IMR-90 (cell line): ENCODE measurements at regions of chr19 and their contacts with region 1.

Region 1: DNA sequence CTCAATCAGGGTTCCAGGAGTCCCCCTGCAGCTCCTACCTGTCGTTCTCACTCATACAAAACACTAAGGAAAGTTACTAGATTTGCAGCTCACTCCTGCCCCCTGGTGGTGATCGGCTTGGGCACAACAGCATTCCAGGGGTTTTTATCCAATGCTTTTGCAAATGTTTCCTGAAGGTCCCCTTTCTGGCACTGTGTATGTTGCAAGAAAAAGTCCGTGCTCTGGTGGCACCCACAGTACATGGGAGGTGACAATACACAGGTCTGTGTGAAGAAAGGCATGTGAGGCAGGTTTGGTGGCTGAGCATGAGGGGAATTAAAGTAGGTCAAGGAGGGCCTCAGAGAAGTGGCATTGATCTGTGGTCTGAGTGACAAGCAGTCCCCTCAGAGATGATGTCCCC is 8.6 kb upstream of the TYK2 start:
- DNase-seq: peak; percentile 71
- ATAC-seq: peak; percentile 76
- H3K4me3 ChIP-seq: no peak overlapping the region
- H3K27ac ChIP-seq: no peak overlapping the region
- H3K4me1 ChIP-seq: no peaks in the 10 kb centered on the region
- H3K27me3 ChIP-seq: no peaks in the 10 kb centered on the region
- CTCF ChIP-seq: peak; percentile 86
- POLR2A ChIP-seq: no peak
- RAD21 ChIP-seq: peak; percentile 74

Region 2: GRCh38 chr19:10259162-10259905 is 129.6 kb before region 1 on chr19:
- CTCF ChIA-PET with region 1: interaction called, 7 read pairs
- POLR2A ChIA-PET with region 1: no interaction called
- dilution Hi-C with region 1: no loop called
- in situ Hi-C with region 1: loop called (anchors 5 kb)
- intact Hi-C with region 1: loop called (anchors 1 kb)
- DNase-seq: peak; percentile 85
- ATAC-seq: peak; percentile 85
- H3K4me3 ChIP-seq: no peak overlapping the region
- H3K27ac ChIP-seq: no peak overlapping the region
- H3K4me1 ChIP-seq: no peaks in the 10 kb centered on the region
- H3K27me3 ChIP-seq: no peaks in the 10 kb centered on the region
- CTCF ChIP-seq: peak; percentile 79
- POLR2A ChIP-seq: no peak
- RAD21 ChIP-seq: peak; percentile 81

Region 3: DNA sequence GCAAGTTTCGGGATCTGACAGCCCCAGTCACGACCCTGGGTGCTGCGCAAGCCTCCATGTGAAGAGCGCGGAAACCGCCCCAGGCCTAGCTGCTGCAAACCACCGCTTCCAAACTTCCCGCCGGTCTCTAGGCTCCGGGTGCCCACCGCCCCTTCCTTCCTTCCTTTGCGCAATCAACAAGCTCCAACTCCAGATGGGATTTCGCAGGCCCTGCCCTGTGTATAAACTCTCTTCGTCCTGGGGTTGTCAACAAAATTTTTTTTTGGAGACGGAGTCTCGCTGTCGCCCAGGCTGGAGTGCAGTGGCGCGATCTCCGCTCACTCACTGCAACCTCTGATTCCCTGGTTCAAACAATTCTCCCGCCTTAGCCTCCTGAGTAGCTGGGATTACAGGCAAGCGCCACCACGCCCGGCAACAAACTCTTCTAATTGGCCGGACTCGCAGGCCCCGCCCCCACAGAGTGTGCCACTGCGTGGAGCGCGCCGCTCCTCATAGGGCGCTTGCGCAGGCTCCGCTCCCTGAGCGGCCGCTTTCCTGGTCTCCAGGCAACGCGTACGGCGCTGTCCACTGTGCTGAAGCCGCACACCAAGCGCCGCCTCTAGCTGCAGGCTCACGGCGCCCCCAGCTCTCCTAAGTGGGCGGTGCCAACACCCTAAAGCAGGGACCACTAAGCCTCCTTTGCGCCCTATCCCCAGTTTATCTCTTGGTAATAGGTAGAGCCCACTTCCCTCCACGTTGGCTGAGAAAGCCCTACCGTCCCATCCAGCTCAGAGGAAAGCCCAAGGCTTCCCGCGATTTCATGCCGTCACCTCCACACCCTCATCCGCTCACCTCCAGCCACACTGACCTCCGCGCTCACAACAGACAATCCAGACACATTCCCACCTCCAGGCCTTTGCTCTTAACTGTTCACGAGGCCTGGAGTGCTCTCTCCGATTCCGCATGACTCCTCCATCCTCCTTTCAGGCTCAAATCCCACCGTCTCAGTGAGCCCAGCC is 306.7 kb after region 1 on chr19:
- CTCF ChIA-PET with region 1: no interaction called
- POLR2A ChIA-PET with region 1: no interaction called
- dilution Hi-C with region 1: no loop called
- in situ Hi-C with region 1: no loop called
- intact Hi-C with region 1: no loop called
- DNase-seq: peak; percentile 91
- ATAC-seq: peak; percentile 99
- H3K4me3 ChIP-seq: no peak overlapping the region
- H3K27ac ChIP-seq: no peak overlapping the region
- H3K4me1 ChIP-seq: no peaks in the 10 kb centered on the region
- H3K27me3 ChIP-seq: no peaks in the 10 kb centered on the region
- CTCF ChIP-seq: 0 out of 2 replicates have a peak, but pooled peaks have one; percentile 4
- POLR2A ChIP-seq: no peak
- RAD21 ChIP-seq: no peak